Naive thymus-derived CD8-positive, alpha-beta T cell (primary cell): ENCODE measurements at regions of chr12 and their contacts with region 1.

Region 1: GRCh38 chr12:53675651-53676453 is at the start of gene ATP5MC2:
- DNase-seq: peak; percentile 95 to 98 (median 97)
- ATAC-seq: peak; percentile 91 to 92
- H3K4me3 Mint-ChIP-seq: peak within 1 kb of the TSS; percentile 92 to 99 (median 96)
- H3K27ac Mint-ChIP-seq: peak within 1 kb of the TSS; percentile 95 to 99 (median 98)
- H3K4me1 Mint-ChIP-seq: peaks cover 6 to 44% (median 29%) of the 10 kb centered on the region in 4 donors
- H3K27me3 Mint-ChIP-seq: peaks cover 7 to 27% (median 14%) of the 10 kb centered on the region in 5 donors
- polyA plus RNA-seq, gene ATP5MC2: 519 to 658 (median 605) TPM

Region 2: GRCh38 chr12:53353257-53353655 is 322.6 kb before region 1 on chr12:
- POLR2A ChIA-PET with region 1: no interaction called
- DNase-seq: no peak
- ATAC-seq: no peak
- H3K4me3 Mint-ChIP-seq: no peak overlapping the region
- H3K27ac Mint-ChIP-seq: no peak overlapping the region
- H3K4me1 Mint-ChIP-seq: peaks cover 6 to 10% (median 8%) of the 10 kb centered on the region in 4 donors
- H3K27me3 Mint-ChIP-seq: no peaks in the 10 kb centered on the region

Region 3: GRCh38 chr12:53625946-53626701 is 49.7 kb before region 1 on chr12 and contains the start of gene ATF7:
- POLR2A ChIA-PET with region 1: interaction called, 18 read pairs
- DNase-seq: peak; percentile 94 to 100 (median 99)
- ATAC-seq: peak; percentile 95 to 96
- H3K4me3 Mint-ChIP-seq: peak within 1 kb of the TSS; percentile 94 to 100 (median 98)
- H3K27ac Mint-ChIP-seq: peak within 1 kb of the TSS; percentile 95 to 99 (median 98)
- H3K4me1 Mint-ChIP-seq: peaks cover 24 to 55% (median 44%) of the 10 kb centered on the region in 4 donors
- H3K27me3 Mint-ChIP-seq: no peaks in the 10 kb centered on the region
- polyA plus RNA-seq, gene ATF7: 13.0 to 19.2 (median 13.7) TPM

Region 4: GRCh38 chr12:53664936-53665335 is 10.9 kb before region 1 on chr12:
- POLR2A ChIA-PET with region 1: interaction called, 10 read pairs
- DNase-seq: no peak
- ATAC-seq: no peak
- H3K4me3 Mint-ChIP-seq: no peak overlapping the region
- H3K27ac Mint-ChIP-seq: peak overlapping the region in 1 of 10 donors; percentile 51
- H3K4me1 Mint-ChIP-seq: peaks cover 0 to 4% (median 2%) of the 10 kb centered on the region in 4 donors
- H3K27me3 Mint-ChIP-seq: no peaks in the 10 kb centered on the region